HEK293 (cell line): ENCODE measurements at regions of chr15 and their contacts with region 1.

Region 1: DNA sequence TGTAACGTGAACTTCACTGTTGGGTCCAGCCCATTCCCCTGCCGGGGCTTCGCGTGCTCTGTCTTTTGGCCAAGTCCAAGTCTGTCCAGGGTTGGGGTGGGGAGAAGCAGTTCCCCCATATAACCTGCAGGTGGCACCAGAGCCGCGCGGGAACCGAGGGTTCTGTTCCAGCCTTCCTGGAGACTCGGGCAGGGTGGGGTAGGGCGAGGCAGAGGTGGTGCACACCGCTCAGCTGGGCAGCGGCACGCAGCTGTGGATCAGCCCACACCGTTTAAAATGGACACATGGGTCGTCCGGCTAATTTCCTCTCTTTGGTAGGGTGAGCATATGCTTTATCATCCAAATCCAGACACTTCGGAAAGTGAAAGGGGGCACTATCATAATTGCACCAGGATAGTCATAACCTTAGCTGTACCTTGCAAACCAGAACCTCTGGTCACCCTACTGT is 118.1 kb downstream of the TBC1D2B start:
- H3K4me3 ChIP-seq: no peak overlapping the region
- H3K27ac ChIP-seq: no peak overlapping the region
- H3K4me1 ChIP-seq: no peaks in the 10 kb centered on the region
- CTCF ChIP-seq: peak; percentile 81

Region 2: DNA sequence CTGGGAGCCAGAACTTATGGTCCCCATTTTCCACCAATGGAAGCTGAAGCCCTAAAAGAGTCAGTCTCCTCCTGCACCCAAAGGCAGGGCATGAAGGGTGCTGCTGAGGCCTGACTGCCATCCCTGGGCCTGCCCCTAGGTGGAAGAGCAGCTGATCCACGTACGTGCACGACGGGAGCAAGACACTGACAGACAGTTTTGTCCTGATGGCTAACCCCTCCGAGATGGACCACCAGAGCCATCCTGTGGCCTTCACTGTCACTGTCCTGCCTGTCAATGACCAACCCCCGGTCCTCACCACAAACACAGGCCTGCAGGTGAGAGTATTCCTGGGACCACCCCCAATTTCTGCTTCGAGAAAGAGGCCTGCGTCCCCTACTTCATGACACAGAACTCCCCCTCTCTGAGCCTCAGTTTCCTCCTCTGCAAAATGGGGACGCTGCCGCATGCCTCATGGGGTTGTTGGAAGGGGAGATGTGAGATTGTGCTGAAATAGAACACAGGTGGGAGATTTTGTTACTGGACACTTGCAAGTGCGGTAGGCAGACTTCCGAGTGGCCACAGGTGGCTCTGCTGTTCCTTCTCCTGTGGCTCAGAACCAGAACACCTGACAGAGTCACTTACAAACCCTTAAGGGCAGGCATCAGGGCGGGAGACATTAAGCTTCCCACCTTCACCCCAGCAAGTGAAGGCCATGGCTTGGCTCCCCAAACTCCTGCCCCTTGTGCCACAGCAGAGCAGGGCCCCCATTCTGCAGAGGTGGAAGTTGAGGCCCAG is 57.3 kb before region 1 on chr15:
- CTCF ChIA-PET with region 1: interaction called, 12 read pairs
- POLR2A ChIA-PET with region 1: no interaction called
- H3K4me3 ChIP-seq: no peak overlapping the region
- H3K27ac ChIP-seq: no peak overlapping the region
- H3K4me1 ChIP-seq: no peaks in the 10 kb centered on the region
- CTCF ChIP-seq: no peak

Region 3: DNA sequence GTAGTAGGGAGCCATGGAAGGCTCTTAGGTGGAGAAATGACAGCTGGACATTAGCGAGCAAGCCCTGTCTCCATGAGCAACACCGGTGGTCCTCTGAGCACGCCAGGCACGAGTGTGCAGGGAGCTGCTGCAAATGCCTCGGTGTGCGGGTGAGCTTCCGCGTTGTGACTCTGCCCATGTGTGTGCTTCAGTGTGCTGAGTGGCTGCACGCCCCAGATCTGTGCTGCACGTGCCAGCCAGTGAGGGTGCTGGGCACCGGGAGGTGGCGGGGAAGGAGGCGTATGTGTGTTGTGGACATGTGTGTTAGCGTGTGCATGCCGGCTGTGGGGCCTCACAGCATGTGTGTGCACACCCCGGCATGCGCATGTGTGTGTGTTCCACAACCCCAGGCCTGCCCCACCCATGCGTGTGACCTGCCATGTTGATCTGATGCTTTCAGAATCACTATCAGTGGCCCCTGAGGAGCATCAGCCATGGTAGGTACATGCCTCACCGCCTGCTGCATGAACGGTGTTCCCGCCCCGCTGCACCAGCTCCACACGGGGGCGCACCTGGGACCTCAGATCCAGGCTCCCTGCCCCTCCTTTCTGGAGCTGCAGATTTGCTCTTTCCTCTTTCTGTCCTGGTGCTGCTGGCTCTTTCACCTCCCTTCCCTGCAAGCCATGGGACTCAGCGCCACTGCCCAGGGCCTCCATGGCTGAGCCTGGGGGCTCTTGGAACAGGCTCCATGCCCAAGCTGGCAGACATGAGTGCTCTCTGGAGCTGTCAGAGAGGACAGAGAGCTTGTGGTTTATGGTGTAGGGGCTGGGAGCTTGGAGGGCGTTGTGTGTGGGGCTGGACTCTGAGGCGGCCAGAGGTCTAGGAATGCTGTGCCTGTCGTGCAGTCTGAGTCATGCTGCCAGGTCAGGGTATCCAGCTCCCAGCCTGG is 51.4 kb before region 1 on chr15:
- CTCF ChIA-PET with region 1: interaction called, 25 read pairs
- POLR2A ChIA-PET with region 1: no interaction called
- H3K4me3 ChIP-seq: no peak overlapping the region
- H3K27ac ChIP-seq: no peak overlapping the region; the same call in 1 of the 2 replicates
- H3K4me1 ChIP-seq: no peaks in the 10 kb centered on the region
- CTCF ChIP-seq: peak; percentile 66; the same call in 1 of the 2 replicates

Region 4: GRCh38 chr15:78000091-78000926 is 40.9 kb after region 1 on chr15:
- CTCF ChIA-PET with region 1: interaction called, 18 read pairs
- POLR2A ChIA-PET with region 1: no interaction called
- H3K4me3 ChIP-seq: no peak overlapping the region
- H3K27ac ChIP-seq: no peak overlapping the region
- H3K4me1 ChIP-seq: peaks cover 6% of the 10 kb centered on the region; the same call in 1 of the 2 replicates
- CTCF ChIP-seq: peak; percentile 87

Region 5: DNA sequence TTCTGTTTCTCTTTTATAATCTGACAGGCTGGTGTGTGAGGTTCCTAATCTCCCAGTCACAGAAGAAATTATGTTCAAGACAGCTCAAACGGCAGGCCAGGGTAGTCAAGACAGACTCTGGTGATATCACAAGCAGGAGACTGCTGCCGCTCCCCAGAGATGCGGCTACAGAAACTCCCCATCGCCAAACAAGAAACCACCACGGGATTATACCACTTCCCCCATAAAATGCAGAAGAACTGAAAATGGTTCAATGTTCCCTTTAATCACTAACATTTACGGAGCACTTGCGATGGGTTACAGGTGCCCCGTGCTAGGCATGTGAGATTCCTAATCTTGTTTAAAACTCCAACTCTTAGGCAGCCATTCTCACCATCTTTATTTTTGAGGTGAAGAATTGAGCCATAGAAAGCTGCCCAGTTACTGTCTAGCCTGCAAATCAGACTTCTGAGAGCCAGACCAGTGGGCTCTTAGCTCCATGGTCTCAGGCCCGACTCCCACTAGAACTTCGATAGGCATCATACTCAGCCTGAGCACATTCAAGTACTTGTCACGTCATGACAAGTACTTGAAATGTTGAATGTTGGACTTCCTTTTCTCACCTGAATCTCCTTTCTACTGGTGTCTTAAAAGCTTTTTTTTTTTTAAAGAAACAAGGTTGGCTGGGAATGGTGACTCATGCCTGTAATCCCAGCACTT is 59.6 kb after region 1 on chr15:
- CTCF ChIA-PET with region 1: interaction called, 3 read pairs
- POLR2A ChIA-PET with region 1: interaction called, 12 read pairs
- H3K4me3 ChIP-seq: no peak overlapping the region
- H3K27ac ChIP-seq: no peak overlapping the region
- H3K4me1 ChIP-seq: no peaks in the 10 kb centered on the region
- CTCF ChIP-seq: no peak